ENCODE measurements at regions of chr20 and their contacts with region 1.

Region 1: GRCh38 chr20:56247948-56248782 is at the start of gene MC3R:
- DNase-seq: no peak
- ATAC-seq: no peak
- H3K4me3 ChIP-seq: no peak within 1 kb of the TSS
- H3K27ac ChIP-seq: no peak within 1 kb of the TSS
- H3K4me1 ChIP-seq: no peaks in the 10 kb centered on the region
- H3K27me3 ChIP-seq: peaks cover 0 to 9% (median 3%) of the 10 kb centered on the region in 3 donors
- CTCF ChIP-seq: peak; percentile 37
- total RNA-seq, gene MC3R: not detected

Region 2: GRCh38 chr20:54680872-54681619 is 1567.1 kb before region 1 on chr20:
- intact Hi-C with region 1: loop called in 1 of 2 experiments (anchors 10 kb)
- DNase-seq: no peak
- ATAC-seq: no peak
- H3K4me3 ChIP-seq: no peak overlapping the region
- H3K27ac ChIP-seq: no peak overlapping the region
- H3K4me1 ChIP-seq: no peaks in the 10 kb centered on the region
- H3K27me3 ChIP-seq: peaks cover 2 to 31% (median 9%) of the 10 kb centered on the region in 3 donors
- CTCF ChIP-seq: peak; percentile 53

Measured in psoas muscle (tissue), 8 donors.